ENCODE measurements at regions of chr10 and their contacts with region 1.

Region 1: DNA sequence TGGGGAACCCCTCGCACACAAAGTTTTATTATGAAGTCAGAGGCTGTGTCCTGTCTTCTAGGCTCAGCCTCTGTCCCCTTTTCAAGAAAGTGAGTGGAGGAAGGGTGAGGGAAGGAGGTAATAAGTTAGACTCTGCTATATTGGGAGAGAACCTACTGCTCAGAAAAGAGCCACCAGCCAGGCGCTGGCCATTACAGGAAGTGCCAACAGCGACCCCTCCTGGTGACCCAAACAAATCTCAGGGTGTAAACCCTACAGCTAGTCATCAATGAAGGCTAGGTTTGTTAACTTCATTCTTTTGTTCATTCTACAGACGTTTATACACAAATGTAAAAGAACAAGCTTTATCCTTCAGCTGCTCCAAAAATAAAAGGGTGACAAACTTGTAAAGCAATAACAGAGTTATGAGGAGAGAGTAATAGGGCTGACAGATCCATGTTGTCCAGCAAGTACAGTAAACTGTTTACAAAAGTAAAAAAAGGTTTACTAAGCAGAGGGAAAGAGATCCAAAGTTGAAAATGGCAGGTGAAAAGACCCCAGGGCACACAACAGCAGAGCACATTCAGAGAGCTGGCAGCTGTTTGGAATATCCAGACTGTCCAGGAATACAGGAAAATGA is 82.7 kb downstream of the FAM204A start:
- DNase-seq: peak; percentile 47
- H3K4me3 ChIP-seq: peak overlapping the region in 1 of 2 experiments; percentile 36; a peak in 1 of 4 replicates
- H3K27ac ChIP-seq: no peak overlapping the region
- H3K4me1 ChIP-seq: peaks cover 0 to 22% of the 10 kb centered on the region in 2 experiments; a peak in 2 of 4 replicates
- H3K27me3 ChIP-seq: no peaks in the 10 kb centered on the region; the same call in 1 of the 2 replicates
- CTCF ChIP-seq: peak; percentile 66
- EP300 ChIP-seq: no peak
- RAD21 ChIP-seq: peak; percentile 66

Region 2: DNA sequence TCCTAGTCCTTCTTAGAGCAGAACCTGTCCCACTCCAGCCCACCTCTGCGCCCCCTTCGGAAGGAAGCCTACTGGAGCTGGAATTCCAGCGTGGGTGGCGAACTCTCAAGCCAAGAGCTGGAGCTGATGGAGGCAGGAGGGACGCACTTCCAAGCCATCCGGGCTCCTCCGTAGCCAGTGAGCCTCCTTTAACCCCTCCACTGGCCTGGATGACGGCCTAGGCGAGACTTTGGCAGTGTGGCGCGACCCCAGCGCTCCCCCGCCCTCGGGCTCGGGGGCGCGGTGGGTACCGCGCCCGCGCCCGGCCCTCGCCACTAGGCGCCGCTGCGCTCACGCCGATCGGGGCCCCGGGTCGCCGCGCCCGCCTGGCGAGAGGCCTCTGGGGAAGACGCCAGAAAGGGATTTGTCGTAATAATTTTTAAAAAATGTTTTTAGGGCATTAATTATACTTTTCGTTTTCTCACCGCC is 721.9 kb before region 1 on chr10:
- CTCF ChIA-PET with region 1: interaction called, 10 read pairs
- POLR2A ChIA-PET with region 1: no interaction called
- DNase-seq: peak; percentile 93
- H3K4me3 ChIP-seq: peak overlapping the region in 1 of 2 experiments; percentile 37; a peak in 1 of 4 replicates
- H3K27ac ChIP-seq: no peak overlapping the region
- H3K4me1 ChIP-seq: peaks cover 0 to 21% of the 10 kb centered on the region in 2 experiments; a peak in 2 of 4 replicates
- H3K27me3 ChIP-seq: peaks cover 89% of the 10 kb centered on the region
- CTCF ChIP-seq: peak; percentile 65
- EP300 ChIP-seq: no peak
- RAD21 ChIP-seq: peak; percentile 72

Region 3: GRCh38 chr10:118151461-118151860 is 107.9 kb before region 1 on chr10:
- CTCF ChIA-PET with region 1: no interaction called
- POLR2A ChIA-PET with region 1: no interaction called
- DNase-seq: no peak
- H3K4me3 ChIP-seq: no peak overlapping the region
- H3K27ac ChIP-seq: no peak overlapping the region
- H3K4me1 ChIP-seq: no peaks in the 10 kb centered on the region
- H3K27me3 ChIP-seq: no peaks in the 10 kb centered on the region
- CTCF ChIP-seq: no peak
- EP300 ChIP-seq: no peak
- RAD21 ChIP-seq: no peak

Region 4: GRCh38 chr10:118272149-118272721 is 12.8 kb after region 1 on chr10:
- CTCF ChIA-PET with region 1: interaction called, 36 read pairs
- POLR2A ChIA-PET with region 1: no interaction called
- DNase-seq: no peak
- H3K4me3 ChIP-seq: no peak overlapping the region
- H3K27ac ChIP-seq: no peak overlapping the region
- H3K4me1 ChIP-seq: peaks cover 0 to 10% of the 10 kb centered on the region in 2 experiments; a peak in 1 of 4 replicates
- H3K27me3 ChIP-seq: no peaks in the 10 kb centered on the region; the same call in 1 of the 2 replicates
- CTCF ChIP-seq: no peak
- EP300 ChIP-seq: no peak
- RAD21 ChIP-seq: no peak

Region 5: GRCh38 chr10:118286051-118286838 is 26.8 kb after region 1 on chr10:
- CTCF ChIA-PET with region 1: interaction called, 10 read pairs
- POLR2A ChIA-PET with region 1: no interaction called
- DNase-seq: no peak
- H3K4me3 ChIP-seq: no peak overlapping the region
- H3K27ac ChIP-seq: no peak overlapping the region; a peak in 1 of 4 replicates
- H3K4me1 ChIP-seq: peaks cover 0 to 8% of the 10 kb centered on the region in 2 experiments; a peak in 1 of 4 replicates
- H3K27me3 ChIP-seq: no peaks in the 10 kb centered on the region
- CTCF ChIP-seq: no peak
- EP300 ChIP-seq: no peak
- RAD21 ChIP-seq: no peak

Measured in SK-N-SH (cell line).